Calu3 (cell line): ENCODE measurements at regions of chr6 and their contacts with region 1.

Region 1: GRCh38 chr6:32244946-32245398 is 21.1 kb upstream of the NOTCH4 start:
- DNase-seq: peak; percentile 91
- H3K4me3 Mint-ChIP-seq: peak overlapping the region; percentile 1
- H3K27ac Mint-ChIP-seq: no peak overlapping the region
- H3K4me1 Mint-ChIP-seq: peaks cover 9% of the 10 kb centered on the region
- H3K27me3 Mint-ChIP-seq: peaks cover 47% of the 10 kb centered on the region
- CTCF ChIP-seq: peak; percentile 99

Region 2: DNA sequence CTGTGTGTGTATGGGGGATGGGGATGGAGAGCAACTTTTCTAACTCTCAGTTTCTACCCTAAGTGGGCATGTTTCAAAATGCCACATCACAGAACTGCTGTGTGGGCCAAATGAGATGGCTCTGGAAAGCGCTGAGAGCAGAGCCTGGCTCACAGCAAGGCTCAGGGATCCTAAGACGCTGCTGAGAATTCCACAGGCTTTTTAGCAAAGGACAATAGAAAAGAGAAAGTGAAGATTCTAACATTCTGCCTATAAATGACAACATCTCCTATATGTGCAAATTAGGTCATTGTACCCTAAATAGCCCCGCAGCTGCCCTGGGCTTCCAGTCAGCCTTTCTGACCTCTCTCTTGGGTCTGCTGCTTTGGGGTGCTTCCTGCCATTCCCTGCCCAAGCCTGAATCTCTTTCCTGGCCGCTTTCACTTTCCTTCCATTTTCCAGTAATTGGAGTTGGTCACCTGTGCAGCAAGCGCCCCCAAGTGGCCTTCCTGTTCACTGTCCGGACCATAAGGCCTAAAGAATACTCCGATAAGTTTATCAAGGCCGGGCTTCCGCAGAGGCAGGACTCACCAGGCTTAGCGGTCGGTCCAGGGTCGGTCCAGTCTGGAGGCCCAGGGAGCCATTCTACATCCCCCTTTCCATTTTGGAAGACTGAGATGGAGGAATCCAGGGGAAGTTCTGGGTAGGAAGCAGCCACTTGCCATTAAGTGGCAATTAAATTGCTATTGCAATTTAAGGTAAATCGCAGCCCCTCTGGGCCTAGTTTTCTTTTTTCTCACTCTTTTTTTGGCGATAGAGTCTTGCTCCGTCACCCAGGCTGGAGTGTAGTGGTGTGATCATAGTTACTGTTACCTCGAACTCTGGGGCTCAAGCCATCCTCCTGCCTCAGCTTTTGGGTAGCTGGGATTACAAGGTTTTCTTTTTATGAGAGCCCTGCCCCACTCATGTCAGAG is 1367.3 kb before region 1 on chr6:
- CTCF ChIA-PET with region 1: no interaction called
- intact Hi-C with region 1: loop called (anchors 1 kb)
- DNase-seq: peak; percentile 97
- H3K4me3 Mint-ChIP-seq: peak overlapping the region; percentile 47
- H3K27ac Mint-ChIP-seq: peak overlapping the region; percentile 61
- H3K4me1 Mint-ChIP-seq: peaks cover 59% of the 10 kb centered on the region
- H3K27me3 Mint-ChIP-seq: peaks cover 16% of the 10 kb centered on the region
- CTCF ChIP-seq: peak; percentile 98

Region 3: GRCh38 chr6:32413427-32414047 is 168.6 kb after region 1 on chr6:
- CTCF ChIA-PET with region 1: no interaction called
- intact Hi-C with region 1: loop called (anchors 2 kb)
- DNase-seq: peak; percentile 94
- H3K4me3 Mint-ChIP-seq: no peak overlapping the region
- H3K27ac Mint-ChIP-seq: no peak overlapping the region
- H3K4me1 Mint-ChIP-seq: peaks cover 21% of the 10 kb centered on the region
- H3K27me3 Mint-ChIP-seq: peaks cover 84% of the 10 kb centered on the region
- CTCF ChIP-seq: peak; percentile 96

Region 4: DNA sequence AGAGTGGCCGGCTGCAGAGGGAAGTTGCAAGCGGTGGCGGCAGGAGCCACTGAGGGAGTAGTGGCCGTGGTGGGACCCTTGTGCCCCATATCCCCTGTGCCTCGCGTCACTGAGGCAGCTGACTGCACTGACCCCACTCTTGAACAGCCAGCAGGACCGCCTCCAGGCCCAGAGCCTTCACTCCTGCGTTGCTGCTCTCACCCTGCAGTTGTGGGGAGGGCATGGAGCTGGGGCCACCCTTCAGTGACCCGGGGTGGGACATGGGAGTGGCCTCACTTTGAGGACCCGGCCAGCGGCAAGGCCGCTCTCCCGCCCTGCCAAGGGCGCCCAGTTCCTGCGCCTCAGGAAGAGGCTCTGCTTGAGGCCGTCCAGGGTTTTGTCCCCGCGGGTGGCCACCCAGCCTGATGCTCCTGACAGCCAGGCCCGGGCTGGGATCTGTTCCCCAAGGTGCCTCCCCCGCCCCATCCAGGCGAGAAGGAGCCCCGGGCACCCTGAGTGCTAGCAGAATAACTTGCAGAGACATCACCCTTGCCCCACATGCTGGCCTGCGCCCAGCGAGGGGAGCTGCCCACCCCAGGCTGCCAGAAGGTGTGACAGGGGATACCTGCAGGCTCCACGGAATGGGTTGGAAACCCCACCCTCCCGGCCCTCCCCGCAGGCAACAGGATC is 239.1 kb after region 1 on chr6:
- CTCF ChIA-PET with region 1: no interaction called
- intact Hi-C with region 1: no loop called
- DNase-seq: no peak
- H3K4me3 Mint-ChIP-seq: no peak overlapping the region
- H3K27ac Mint-ChIP-seq: no peak overlapping the region
- H3K4me1 Mint-ChIP-seq: no peaks in the 10 kb centered on the region
- H3K27me3 Mint-ChIP-seq: peaks cover 68% of the 10 kb centered on the region
- CTCF ChIP-seq: no peak

Region 5: DNA sequence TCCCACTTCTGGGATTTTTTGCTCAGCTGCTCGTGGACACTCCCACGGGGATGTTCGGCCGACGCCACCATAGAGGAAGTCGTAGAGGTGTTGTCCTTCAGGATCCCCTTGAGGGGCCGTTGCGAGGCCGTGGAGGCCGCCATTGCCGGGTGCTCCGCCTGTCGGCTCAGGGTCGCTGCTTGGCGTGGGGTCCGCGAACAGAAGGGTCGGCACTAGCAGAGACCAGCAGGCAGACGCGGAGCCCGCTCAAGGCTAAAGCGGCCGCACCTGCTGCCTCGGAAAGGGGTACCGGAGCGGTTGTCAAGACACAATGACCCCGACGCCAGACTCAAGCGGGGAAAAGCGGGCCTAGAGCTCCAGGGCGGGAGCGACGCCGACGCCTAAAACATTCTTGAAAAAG is 634.7 kb after region 1 on chr6:
- CTCF ChIA-PET with region 1: no interaction called
- intact Hi-C with region 1: no loop called
- DNase-seq: no peak
- H3K4me3 Mint-ChIP-seq: no peak overlapping the region
- H3K27ac Mint-ChIP-seq: no peak overlapping the region
- H3K4me1 Mint-ChIP-seq: no peaks in the 10 kb centered on the region
- H3K27me3 Mint-ChIP-seq: peaks cover 4% of the 10 kb centered on the region
- CTCF ChIP-seq: no peak